Aorta (tissue), 5 donors: ENCODE measurements at regions of chr1 and their contacts with region 1.

Region 1: GRCh38 chr1:84573967-84574842 is at the start of gene CTBS:
- DNase-seq: peak; percentile 93 to 97
- ATAC-seq: peak; percentile 98
- H3K4me3 ChIP-seq: peak within 1 kb of the TSS; percentile 47 to 97
- H3K27ac ChIP-seq: peak within 1 kb of the TSS; percentile 70 to 98
- H3K4me1 ChIP-seq: peaks cover 2 to 4% of the 10 kb centered on the region in 2 donors
- H3K27me3 ChIP-seq: no peaks in the 10 kb centered on the region
- total RNA-seq, gene CTBS: 24.2 to 27.9 TPM

Region 2: DNA sequence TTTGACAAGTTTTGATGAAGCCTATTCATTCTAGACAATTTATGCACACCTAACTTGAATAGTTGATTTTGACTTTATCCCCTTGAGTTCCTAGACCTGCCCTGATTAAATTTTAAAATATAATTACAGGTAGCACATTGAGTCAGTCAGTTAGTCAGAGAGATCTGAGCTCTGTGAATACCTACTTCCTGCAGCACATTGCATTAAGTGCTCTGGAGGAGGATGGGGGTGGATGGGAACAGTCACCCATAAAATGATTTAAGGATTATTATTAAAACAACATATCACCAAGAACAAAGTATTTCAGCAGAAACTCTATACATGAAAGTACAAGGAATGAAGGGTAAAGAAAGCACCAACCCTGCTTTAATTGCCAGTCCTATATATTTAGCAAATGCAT is 106.9 kb before region 1 on chr1:
- intact Hi-C with region 1: no loop called
- DNase-seq: no peak
- ATAC-seq: no peak
- H3K4me3 ChIP-seq: no peak overlapping the region
- H3K27ac ChIP-seq: no peak overlapping the region
- H3K4me1 ChIP-seq: no peaks in the 10 kb centered on the region
- H3K27me3 ChIP-seq: no peaks in the 10 kb centered on the region

Region 3: GRCh38 chr1:84506002-84506728 is 68.0 kb before region 1 on chr1 and contains the starts of genes GNG5 and SPATA1:
- intact Hi-C with region 1: loop called (anchors 2 to 5 kb)
- DNase-seq: peak; percentile 99 to 100
- ATAC-seq: peak; percentile 99
- H3K4me3 ChIP-seq: peak within 1 kb of the TSS; percentile 48 to 69
- H3K27ac ChIP-seq: peak within 1 kb of the TSS; percentile 5 to 85
- H3K4me1 ChIP-seq: peaks cover 1 to 10% of the 10 kb centered on the region in 2 donors
- H3K27me3 ChIP-seq: no peaks in the 10 kb centered on the region
- total RNA-seq, gene GNG5: 56.7 to 64.6 TPM
- total RNA-seq, gene SPATA1: 1.9 to 2.7 TPM

Region 4: GRCh38 chr1:84598846-84599741 is 24.9 kb after region 1 on chr1:
- intact Hi-C with region 1: loop called (anchors 2 kb)
- DNase-seq: no peak
- ATAC-seq: peak; percentile 21
- H3K4me3 ChIP-seq: peak overlapping the region in 1 of 2 donors; percentile 26
- H3K27ac ChIP-seq: peak overlapping the region; percentile 95 to 99
- H3K4me1 ChIP-seq: peaks cover 3 to 7% of the 10 kb centered on the region in 2 donors
- H3K27me3 ChIP-seq: no peaks in the 10 kb centered on the region